ENCODE measurements at regions of chr6 and their contacts with region 1.

Region 1: DNA sequence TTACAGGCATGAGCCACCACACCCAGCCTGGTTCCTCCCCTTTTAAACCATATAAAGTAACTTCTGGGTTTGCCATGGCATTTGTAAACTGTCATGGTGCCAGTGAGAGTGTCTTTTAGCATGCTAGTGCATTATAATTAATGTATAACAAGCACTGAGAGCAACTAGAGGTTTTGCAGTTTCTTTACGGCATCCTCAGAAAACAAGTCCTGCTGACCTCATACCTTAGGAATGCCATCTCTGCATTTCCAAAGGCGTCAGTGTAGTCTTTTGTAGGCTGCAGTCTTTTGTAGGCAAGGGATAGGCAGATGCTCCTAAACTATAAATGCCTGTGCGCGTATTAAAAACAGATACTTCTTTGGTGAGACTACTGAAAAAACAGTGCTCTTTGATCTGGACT is 75.0 kb upstream of the EZR start:
- DNase-seq: peak; percentile 66 to 69
- H3K4me3 ChIP-seq: no peak overlapping the region
- H3K4me3 Mint-ChIP-seq: no peak overlapping the region
- H3K27ac Mint-ChIP-seq: peak overlapping the region; percentile 73
- H3K4me1 ChIP-seq: peaks cover 16% of the 10 kb centered on the region
- H3K4me1 Mint-ChIP-seq: peaks cover 6% of the 10 kb centered on the region
- H3K27me3 ChIP-seq: no peaks in the 10 kb centered on the region
- H3K27me3 Mint-ChIP-seq: no peaks in the 10 kb centered on the region
- CTCF ChIP-seq: no peak

Region 2: GRCh38 chr6:158548418-158549161 is 345.6 kb before region 1 on chr6:
- CTCF ChIA-PET with region 1: no interaction called
- POLR2A ChIA-PET with region 1: no interaction called
- intact Hi-C with region 1: no loop called
- DNase-seq: no peak
- H3K4me3 ChIP-seq: no peak overlapping the region
- H3K4me3 Mint-ChIP-seq: no peak overlapping the region
- H3K27ac Mint-ChIP-seq: no peak overlapping the region
- H3K4me1 ChIP-seq: no peaks in the 10 kb centered on the region
- H3K4me1 Mint-ChIP-seq: peaks cover 6% of the 10 kb centered on the region
- H3K27me3 ChIP-seq: no peaks in the 10 kb centered on the region
- H3K27me3 Mint-ChIP-seq: no peaks in the 10 kb centered on the region
- CTCF ChIP-seq: no peak

Region 3: GRCh38 chr6:158919865-158920264 is 25.7 kb after region 1 on chr6:
- CTCF ChIA-PET with region 1: no interaction called
- POLR2A ChIA-PET with region 1: no interaction called
- intact Hi-C with region 1: loop called (anchors 2 kb)
- DNase-seq: no peak
- H3K4me3 ChIP-seq: no peak overlapping the region
- H3K4me3 Mint-ChIP-seq: no peak overlapping the region
- H3K27ac Mint-ChIP-seq: no peak overlapping the region
- H3K4me1 ChIP-seq: no peaks in the 10 kb centered on the region
- H3K4me1 Mint-ChIP-seq: no peaks in the 10 kb centered on the region
- H3K27me3 ChIP-seq: no peaks in the 10 kb centered on the region
- H3K27me3 Mint-ChIP-seq: no peaks in the 10 kb centered on the region
- CTCF ChIP-seq: no peak

Region 4: DNA sequence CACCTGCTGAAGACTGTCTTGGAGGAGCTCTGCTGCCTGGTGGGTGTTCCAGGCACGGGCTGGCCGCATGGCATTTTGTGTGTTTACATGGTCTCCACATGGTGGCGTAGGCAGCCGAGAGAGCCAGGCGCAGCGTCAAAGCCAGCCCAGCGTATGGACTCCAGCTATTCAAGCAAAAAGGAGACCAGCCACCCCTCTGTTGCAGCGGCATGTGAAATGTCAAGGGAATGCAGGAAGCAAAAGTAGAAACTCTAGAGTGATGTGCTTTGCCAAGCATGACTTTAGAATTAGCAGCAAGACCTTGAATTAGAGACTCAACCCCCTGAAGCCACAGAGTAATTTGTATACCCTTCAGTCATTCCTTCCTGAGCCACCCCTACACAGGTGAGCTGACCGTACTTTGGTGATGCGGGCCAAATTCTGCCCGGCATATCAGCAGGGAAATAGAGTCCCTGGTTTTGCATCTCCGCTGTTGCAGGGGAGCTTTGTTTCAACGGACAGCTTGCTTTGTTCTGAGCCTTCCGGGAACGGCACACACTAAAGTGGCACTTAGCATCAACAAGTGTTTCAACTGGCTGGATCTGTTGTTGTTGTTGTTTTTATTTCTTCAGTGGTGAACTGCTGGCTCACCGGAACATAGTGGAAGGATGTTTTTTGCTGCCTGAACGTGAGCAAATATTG is 323.5 kb after region 1 on chr6:
- CTCF ChIA-PET with region 1: no interaction called
- POLR2A ChIA-PET with region 1: no interaction called
- intact Hi-C with region 1: no loop called
- DNase-seq: peak in 1 of 2 experiments; percentile 9
- H3K4me3 ChIP-seq: no peak overlapping the region
- H3K4me3 Mint-ChIP-seq: no peak overlapping the region
- H3K27ac Mint-ChIP-seq: no peak overlapping the region
- H3K4me1 ChIP-seq: no peaks in the 10 kb centered on the region
- H3K4me1 Mint-ChIP-seq: no peaks in the 10 kb centered on the region
- H3K27me3 ChIP-seq: no peaks in the 10 kb centered on the region; the same call in 1 of the 2 replicates
- H3K27me3 Mint-ChIP-seq: peaks cover 26% of the 10 kb centered on the region
- CTCF ChIP-seq: peak in 1 of 2 experiments; percentile 2